A673 (cell line): ENCODE measurements at regions of chr13 and their contacts with region 1.

Region 1: GRCh38 chr13:38045307-38046048 is 175.9 kb upstream of the TRPC4 start:
- DNase-seq: peak; percentile 88
- H3K4me3 ChIP-seq: no peak overlapping the region
- H3K27ac ChIP-seq: peak overlapping the region; percentile 28
- H3K4me1 ChIP-seq: peaks cover 9% of the 10 kb centered on the region
- H3K27me3 ChIP-seq: no peaks in the 10 kb centered on the region
- CTCF ChIP-seq: peak; percentile 85

Region 2: GRCh38 chr13:37769078-37769477 is 276.4 kb before region 1 on chr13:
- CTCF ChIA-PET with region 1: no interaction called
- POLR2A ChIA-PET with region 1: no interaction called
- intact Hi-C with region 1: loop called (anchors 5 kb)
- DNase-seq: peak; percentile 43
- H3K4me3 ChIP-seq: no peak overlapping the region
- H3K27ac ChIP-seq: no peak overlapping the region
- H3K4me1 ChIP-seq: no peaks in the 10 kb centered on the region
- H3K27me3 ChIP-seq: no peaks in the 10 kb centered on the region
- CTCF ChIP-seq: peak; percentile 55; the same call in 1 of the 2 replicates

Region 3: DNA sequence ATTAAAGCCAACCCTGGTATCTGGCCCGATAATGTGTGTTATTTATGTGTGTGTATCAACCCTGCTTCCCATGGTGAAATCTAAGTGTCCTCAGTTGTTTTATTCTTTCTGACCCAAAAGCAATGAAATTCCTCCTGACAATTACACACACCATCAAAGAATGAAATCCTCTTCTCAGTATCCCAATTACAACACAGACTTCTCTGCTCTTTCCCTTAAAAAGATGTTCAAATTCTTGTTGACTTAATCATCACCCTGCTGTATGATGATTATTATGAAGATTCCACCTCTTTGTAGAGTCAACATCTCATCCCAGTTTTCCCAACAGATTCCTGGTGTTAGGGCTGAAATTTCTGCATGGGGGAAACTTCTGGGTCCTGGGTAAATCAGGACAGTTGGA is 167.0 kb before region 1 on chr13:
- CTCF ChIA-PET with region 1: no interaction called
- POLR2A ChIA-PET with region 1: no interaction called
- intact Hi-C with region 1: no loop called
- DNase-seq: no peak
- H3K4me3 ChIP-seq: no peak overlapping the region
- H3K27ac ChIP-seq: no peak overlapping the region
- H3K4me1 ChIP-seq: no peaks in the 10 kb centered on the region
- H3K27me3 ChIP-seq: no peaks in the 10 kb centered on the region
- CTCF ChIP-seq: no peak